Left colon (tissue), 2 donors: ENCODE measurements at regions of chr20 and their contacts with region 1.

Region 1: DNA sequence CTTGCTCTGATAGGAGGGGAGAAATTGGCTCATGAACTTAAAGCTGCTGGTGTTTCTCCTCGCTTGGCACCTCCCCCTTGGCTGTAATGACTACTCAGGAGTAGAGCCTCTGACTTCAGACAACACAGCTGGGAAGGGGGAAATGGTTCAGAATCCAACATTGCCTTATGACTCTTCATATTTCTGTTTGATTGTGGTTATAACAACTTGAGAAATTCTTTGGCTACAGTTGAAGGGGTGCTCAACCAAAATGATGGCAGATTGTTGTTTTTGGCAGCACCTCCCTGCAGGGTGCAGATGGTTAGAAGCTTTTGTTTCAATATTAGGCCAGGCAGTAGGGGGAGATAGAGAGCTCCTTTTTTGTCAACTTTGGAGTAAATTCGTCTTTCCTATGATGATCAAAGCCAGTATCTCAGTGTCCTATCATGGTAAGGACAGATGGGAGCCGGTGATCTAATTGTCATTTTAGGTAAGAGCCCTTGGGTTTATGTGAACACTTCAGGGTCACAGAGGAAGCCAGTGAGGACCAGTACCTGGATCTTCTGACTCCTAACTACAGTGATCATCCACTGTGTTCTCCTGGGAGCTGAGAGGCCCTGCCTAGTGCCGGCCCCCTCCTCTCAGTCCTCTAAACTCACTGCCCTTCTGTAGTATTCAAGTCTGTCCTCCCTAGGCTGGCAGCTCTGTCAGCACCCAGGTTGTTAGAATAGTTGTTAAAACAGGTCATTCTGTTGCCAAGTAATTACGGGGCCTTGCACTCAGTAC is 39.9 kb downstream of the RPRD1B start:
- DNase-seq: peak; percentile 29 to 50
- ATAC-seq: peak; percentile 76

Region 2: DNA sequence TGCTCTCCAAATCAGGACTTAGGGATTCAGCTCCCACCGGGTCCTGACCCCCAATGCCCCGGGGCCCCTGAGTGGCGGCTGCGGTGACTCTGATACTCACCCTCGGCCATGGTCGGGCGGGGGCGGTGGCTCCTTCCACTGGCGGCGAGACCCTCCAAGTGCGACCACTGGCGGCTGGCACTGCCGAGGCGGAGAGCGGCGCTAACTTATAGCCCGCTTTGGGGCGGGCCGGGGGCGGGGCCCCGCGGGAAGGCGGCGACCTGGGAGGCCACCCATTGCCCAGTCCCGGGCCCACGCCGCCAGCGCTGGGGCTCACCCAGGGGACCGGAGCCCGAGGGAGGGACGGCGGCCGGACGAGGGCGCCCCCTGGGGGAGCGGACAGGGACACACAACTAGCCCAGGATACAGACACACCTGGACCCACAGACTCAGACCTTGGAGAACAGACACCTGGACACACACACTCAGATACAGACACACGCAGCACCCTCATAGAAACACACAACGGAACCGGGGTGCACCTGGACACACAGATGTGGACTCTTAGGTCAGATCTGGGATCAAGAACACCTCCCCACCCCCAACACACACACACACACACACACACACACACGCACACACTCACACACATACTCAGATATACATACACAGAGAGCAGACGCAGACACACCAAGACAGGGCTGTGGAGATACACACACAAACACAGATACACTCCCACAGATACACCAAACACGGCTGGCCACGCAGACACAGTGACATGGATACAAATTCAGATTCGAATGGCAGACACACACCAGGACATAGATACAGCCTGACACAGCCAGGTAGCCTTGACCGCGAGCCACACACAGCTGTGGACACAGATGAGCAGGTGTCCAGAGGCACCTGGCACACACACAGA is 91.8 kb after region 1 on chr20 and contains the start of gene TGM2:
- intact Hi-C with region 1: loop called (anchors 5 to 10 kb)
- DNase-seq: peak; percentile 73 to 79
- ATAC-seq: peak; percentile 95
- total RNA-seq, gene TGM2: 26.9 to 33.9 TPM